IMR-90 (cell line): ENCODE measurements at regions of chr20 and their contacts with region 1.

Region 1: GRCh38 chr20:3679749-3680700 is 1.8 kb downstream of the ADAM33 start:
- DNase-seq: peak; percentile 48
- ATAC-seq: peak; percentile 41
- H3K4me3 ChIP-seq: no peak overlapping the region
- H3K27ac ChIP-seq: no peak overlapping the region
- H3K4me1 ChIP-seq: peaks cover 20% of the 10 kb centered on the region
- H3K27me3 ChIP-seq: peaks cover 13% of the 10 kb centered on the region
- CTCF ChIP-seq: no peak
- POLR2A ChIP-seq: no peak
- RAD21 ChIP-seq: no peak

Region 2: DNA sequence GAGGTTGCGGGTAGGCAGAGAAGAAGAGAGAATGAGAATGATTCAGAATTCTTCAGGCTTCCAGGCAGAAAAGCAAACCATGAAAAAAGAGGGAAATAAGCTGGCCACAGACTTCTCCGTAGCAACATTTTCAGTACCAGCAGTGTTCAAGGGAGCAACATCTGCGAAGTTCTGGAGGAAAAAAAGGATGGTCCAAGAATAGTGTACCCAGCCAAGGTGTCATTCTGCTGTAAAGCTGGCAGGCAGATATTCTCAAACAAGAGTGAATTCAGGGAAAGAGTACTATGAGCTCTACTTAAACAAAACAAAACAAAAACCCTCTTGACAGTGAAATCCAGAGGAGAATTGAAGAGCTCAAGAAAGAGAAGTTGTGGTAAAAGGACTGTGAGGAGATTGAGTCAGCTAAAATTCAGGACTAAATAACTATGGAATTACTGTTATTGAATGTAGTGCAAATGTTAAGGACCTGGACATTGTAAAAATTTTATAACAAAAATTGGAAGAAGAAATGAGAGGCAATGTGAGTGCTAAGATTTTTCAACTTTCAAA is 122.7 kb before region 1 on chr20:
- CTCF ChIA-PET with region 1: interaction called, 10 read pairs
- POLR2A ChIA-PET with region 1: no interaction called
- dilution Hi-C with region 1: no loop called
- in situ Hi-C with region 1: no loop called
- intact Hi-C with region 1: no loop called
- DNase-seq: no peak
- ATAC-seq: no peak
- H3K4me3 ChIP-seq: no peak overlapping the region
- H3K27ac ChIP-seq: no peak overlapping the region
- H3K4me1 ChIP-seq: no peaks in the 10 kb centered on the region; the same call in 1 of the 2 replicates
- H3K27me3 ChIP-seq: no peaks in the 10 kb centered on the region
- CTCF ChIP-seq: no peak
- POLR2A ChIP-seq: no peak
- RAD21 ChIP-seq: no peak

Region 3: GRCh38 chr20:3710703-3711483 is 30.9 kb after region 1 on chr20:
- CTCF ChIA-PET with region 1: interaction called, 19 read pairs
- POLR2A ChIA-PET with region 1: no interaction called
- dilution Hi-C with region 1: no loop called
- in situ Hi-C with region 1: no loop called
- intact Hi-C with region 1: loop called (anchors 1 kb)
- DNase-seq: peak; percentile 28
- ATAC-seq: peak; percentile 75
- H3K4me3 ChIP-seq: no peak overlapping the region
- H3K27ac ChIP-seq: no peak overlapping the region
- H3K4me1 ChIP-seq: no peaks in the 10 kb centered on the region
- H3K27me3 ChIP-seq: peaks cover 19% of the 10 kb centered on the region
- CTCF ChIP-seq: peak; percentile 92
- POLR2A ChIP-seq: no peak
- RAD21 ChIP-seq: peak; percentile 78

Region 4: GRCh38 chr20:3767427-3768341 is 87.7 kb after region 1 on chr20 and contains the start of gene ADISSP:
- CTCF ChIA-PET with region 1: no interaction called
- POLR2A ChIA-PET with region 1: no interaction called
- dilution Hi-C with region 1: no loop called
- in situ Hi-C with region 1: no loop called
- intact Hi-C with region 1: loop called (anchors 5 kb)
- DNase-seq: peak; percentile 98
- ATAC-seq: peak; percentile 96
- H3K4me3 ChIP-seq: peak within 1 kb of the TSS; percentile 67
- H3K27ac ChIP-seq: peak within 1 kb of the TSS; percentile 89
- H3K4me1 ChIP-seq: peaks cover 11% of the 10 kb centered on the region
- H3K27me3 ChIP-seq: no peaks in the 10 kb centered on the region
- CTCF ChIP-seq: peak; percentile 11; the same call in 1 of the 2 replicates
- POLR2A ChIP-seq: peak; percentile 79
- RAD21 ChIP-seq: no peak
- total RNA-seq, gene ADISSP: 31.4 and 31.9 TPM in 2 replicates

Region 5: GRCh38 chr20:3781153-3781910 is 101.3 kb after region 1 on chr20 and contains the start of gene SPEF1:
- CTCF ChIA-PET with region 1: no interaction called
- POLR2A ChIA-PET with region 1: no interaction called
- dilution Hi-C with region 1: no loop called
- in situ Hi-C with region 1: no loop called
- intact Hi-C with region 1: loop called (anchors 1 kb)
- DNase-seq: peak; percentile 92
- ATAC-seq: peak; percentile 75
- H3K4me3 ChIP-seq: peak within 1 kb of the TSS; percentile 25
- H3K27ac ChIP-seq: no peak within 1 kb of the TSS
- H3K4me1 ChIP-seq: peaks cover 18% of the 10 kb centered on the region
- H3K27me3 ChIP-seq: peaks cover 9% of the 10 kb centered on the region; the same call in 1 of the 2 replicates
- CTCF ChIP-seq: peak; percentile 54
- POLR2A ChIP-seq: 0 out of 2 replicates have a peak, but pooled peaks have one; percentile 14
- RAD21 ChIP-seq: peak; percentile 58
- total RNA-seq, gene SPEF1: under 0.01 TPM in 1 of 2 replicates, not detected in the other

Region 6: GRCh38 chr20:4082406-4083097 is 402.5 kb after region 1 on chr20:
- CTCF ChIA-PET with region 1: no interaction called
- POLR2A ChIA-PET with region 1: no interaction called
- dilution Hi-C with region 1: no loop called
- in situ Hi-C with region 1: no loop called
- intact Hi-C with region 1: loop called (anchors 10 kb)
- DNase-seq: peak; percentile 82
- ATAC-seq: peak; percentile 40
- H3K4me3 ChIP-seq: peak overlapping the region; percentile 12; the same call in 1 of the 2 replicates
- H3K27ac ChIP-seq: peak overlapping the region; percentile 97
- H3K4me1 ChIP-seq: peaks cover 22% of the 10 kb centered on the region
- H3K27me3 ChIP-seq: no peaks in the 10 kb centered on the region
- CTCF ChIP-seq: no peak
- POLR2A ChIP-seq: no peak
- RAD21 ChIP-seq: no peak